Activated B cell treated with CpG ODN at 0.5 μM for 24 hours (primary cell): ENCODE measurements at regions of chr14 and their contacts with region 1.

Region 1: DNA sequence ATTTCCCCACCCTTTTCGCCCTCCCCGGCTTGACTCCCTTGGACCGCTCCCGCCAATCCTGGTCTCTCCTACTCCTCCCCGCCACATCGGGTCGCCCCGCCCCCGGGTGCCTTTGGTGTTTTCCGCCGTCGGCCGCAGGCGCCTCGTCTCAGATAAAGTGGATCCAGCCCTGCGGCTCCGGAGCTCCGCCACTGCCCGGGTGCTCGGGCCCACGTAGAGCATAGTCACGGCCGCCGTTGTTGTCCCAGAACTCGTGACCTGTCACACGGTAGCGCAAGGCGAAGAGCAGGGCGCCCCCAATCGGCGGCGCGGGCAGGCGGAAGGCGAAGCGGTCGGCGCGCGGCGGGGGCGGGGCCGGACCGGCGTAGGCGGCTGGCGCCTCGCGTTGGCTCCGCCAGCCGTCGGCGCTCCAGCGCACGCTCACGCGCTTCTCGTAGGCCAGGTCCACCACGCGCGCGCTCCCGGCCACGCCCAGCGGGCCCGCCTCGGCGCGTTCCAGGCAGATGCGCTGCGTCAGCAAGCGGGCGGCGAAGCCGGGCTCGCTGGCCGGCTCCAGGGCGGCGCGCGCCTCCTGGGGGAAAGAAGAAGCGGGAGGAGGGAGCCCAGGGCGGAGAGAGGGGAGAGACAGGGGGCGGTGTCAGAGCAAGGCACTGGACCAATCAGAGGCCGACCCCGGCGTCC is 1.2 kb downstream of the PPP1R3E start:
- DNase-seq: peak; percentile 99
- ATAC-seq: peak; percentile 78
- H3K4me3 Mint-ChIP-seq: peak overlapping the region; percentile 99
- H3K27ac Mint-ChIP-seq: peak overlapping the region; percentile 90
- H3K4me1 Mint-ChIP-seq: peaks cover 37% of the 10 kb centered on the region
- H3K27me3 Mint-ChIP-seq: no peaks in the 10 kb centered on the region
- CTCF ChIP-seq: no peak

Region 2: GRCh38 chr14:22386924-22387775 is 914.3 kb before region 1 on chr14:
- CTCF ChIA-PET with region 1: no interaction called
- POLR2A ChIA-PET with region 1: no interaction called
- intact Hi-C with region 1: loop called (anchors 10 kb)
- DNase-seq: peak; percentile 46
- ATAC-seq: peak; percentile 15
- H3K4me3 Mint-ChIP-seq: peak overlapping the region; percentile 24
- H3K27ac Mint-ChIP-seq: peak overlapping the region; percentile 98
- H3K4me1 Mint-ChIP-seq: peaks cover 78% of the 10 kb centered on the region
- H3K27me3 Mint-ChIP-seq: no peaks in the 10 kb centered on the region
- CTCF ChIP-seq: peak; percentile 18

Region 3: DNA sequence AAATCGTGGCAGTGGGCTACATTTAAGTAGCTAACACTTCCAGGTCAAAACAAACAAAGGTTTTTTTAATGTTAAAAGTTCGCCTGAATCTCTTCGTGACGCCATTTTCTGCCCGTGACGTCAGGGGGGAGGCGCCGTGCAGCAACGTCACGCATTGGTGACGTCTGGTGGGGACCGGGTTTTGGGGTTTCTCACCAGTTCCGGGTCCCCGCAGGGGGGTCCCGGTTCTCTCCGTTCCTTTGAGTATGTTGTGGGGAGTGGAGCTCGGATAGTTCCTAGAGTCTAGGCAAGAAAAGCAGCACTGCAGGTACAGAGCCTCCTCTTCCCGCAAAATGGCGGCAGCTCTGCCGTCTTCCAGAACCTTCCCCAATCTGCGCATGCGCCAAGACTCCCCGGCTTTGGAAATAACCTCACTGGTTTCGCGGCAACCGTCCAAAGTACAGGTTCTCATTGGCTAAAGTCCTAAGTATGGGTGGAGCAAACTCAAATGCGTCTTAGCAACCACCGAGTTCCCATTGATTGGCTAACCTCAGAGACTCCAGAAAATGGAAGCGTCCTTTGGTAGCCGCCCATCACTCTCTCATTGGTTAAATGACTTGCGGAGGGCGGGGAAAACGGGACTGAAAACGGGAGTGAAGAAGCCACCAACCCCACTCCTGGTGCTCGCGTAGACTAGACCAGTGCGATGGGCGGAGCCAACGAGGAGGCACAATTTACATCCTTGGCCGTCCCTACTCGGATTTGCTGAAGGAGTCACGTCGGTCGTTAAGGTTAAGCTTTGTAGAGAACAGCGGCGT is 382.4 kb before region 1 on chr14 and contains the start of gene RBM23:
- CTCF ChIA-PET with region 1: no interaction called
- POLR2A ChIA-PET with region 1: interaction called, 7 read pairs
- intact Hi-C with region 1: loop called (anchors 2 kb)
- DNase-seq: peak; percentile 94
- ATAC-seq: peak; percentile 94
- H3K4me3 Mint-ChIP-seq: peak within 1 kb of the TSS; percentile 99
- H3K27ac Mint-ChIP-seq: peak within 1 kb of the TSS; percentile 100
- H3K4me1 Mint-ChIP-seq: peaks cover 53% of the 10 kb centered on the region
- H3K27me3 Mint-ChIP-seq: no peaks in the 10 kb centered on the region
- CTCF ChIP-seq: no peak
- total RNA-seq, gene RBM23: 130 and 131 TPM in 2 replicates

Region 4: DNA sequence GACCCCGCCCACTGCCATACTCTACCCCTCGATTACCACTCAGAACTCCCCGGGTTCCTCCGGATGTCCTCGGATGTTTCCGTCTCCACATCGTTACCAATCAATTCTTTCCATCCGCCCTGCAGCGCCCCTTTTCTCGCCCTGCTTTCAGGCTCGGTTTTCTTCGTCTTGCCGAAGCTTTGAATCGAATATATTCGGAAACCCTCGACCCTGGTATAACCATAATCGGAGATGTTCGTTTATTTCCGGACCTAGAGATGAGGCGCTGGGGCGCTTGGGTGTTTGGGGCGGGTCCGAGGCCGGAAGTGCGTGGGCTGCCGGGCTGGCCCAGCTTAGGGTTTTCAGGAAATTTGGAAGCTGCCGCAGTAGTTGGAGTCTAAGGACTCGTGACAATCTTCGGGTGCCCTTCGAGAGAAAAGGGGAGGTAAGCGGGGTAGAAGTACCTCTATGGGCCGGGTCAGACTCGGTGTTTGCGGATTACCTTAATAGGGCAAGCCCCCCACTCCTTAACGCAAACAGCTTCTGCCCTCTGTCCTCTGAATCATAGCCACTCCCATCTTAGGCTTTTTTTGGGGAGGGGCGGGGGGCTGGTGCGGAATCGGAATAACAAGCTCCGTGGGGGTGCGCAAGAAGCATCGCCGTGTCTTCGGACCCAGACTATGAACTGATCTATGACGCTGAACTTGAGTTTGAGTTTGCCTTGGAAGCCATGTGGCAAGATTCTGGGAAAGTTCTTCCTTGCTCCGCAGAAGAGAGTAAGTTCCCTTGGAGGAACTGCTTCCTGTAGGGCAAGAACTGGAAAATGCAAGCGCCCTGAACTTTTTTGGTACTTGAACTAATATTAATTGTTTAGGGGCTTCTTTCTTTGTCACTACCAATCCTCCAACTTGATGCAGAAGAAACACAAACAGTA is 206.0 kb before region 1 on chr14 and contains the start of gene C14orf119:
- CTCF ChIA-PET with region 1: interaction called, 3 read pairs
- POLR2A ChIA-PET with region 1: interaction called, 26 read pairs
- intact Hi-C with region 1: loop called (anchors 1 kb)
- DNase-seq: peak; percentile 77
- ATAC-seq: peak; percentile 87
- H3K4me3 Mint-ChIP-seq: no peak within 1 kb of the TSS
- H3K27ac Mint-ChIP-seq: no peak within 1 kb of the TSS
- H3K4me1 Mint-ChIP-seq: peaks cover 34% of the 10 kb centered on the region
- H3K27me3 Mint-ChIP-seq: no peaks in the 10 kb centered on the region
- CTCF ChIP-seq: no peak
- total RNA-seq, gene C14orf119: 35.3 and 36.0 TPM in 2 replicates

Region 5: GRCh38 chr14:23242076-23242475 is 59.4 kb before region 1 on chr14:
- CTCF ChIA-PET with region 1: no interaction called
- POLR2A ChIA-PET with region 1: no interaction called
- intact Hi-C with region 1: no loop called
- DNase-seq: no peak
- ATAC-seq: peak; percentile 46
- H3K4me3 Mint-ChIP-seq: no peak overlapping the region
- H3K27ac Mint-ChIP-seq: no peak overlapping the region
- H3K4me1 Mint-ChIP-seq: peaks cover 9% of the 10 kb centered on the region
- H3K27me3 Mint-ChIP-seq: peaks cover 13% of the 10 kb centered on the region
- CTCF ChIP-seq: no peak

Region 6: GRCh38 chr14:23286020-23286905 is 15.2 kb before region 1 on chr14 and contains the start of gene HOMEZ:
- CTCF ChIA-PET with region 1: interaction called, 14 read pairs
- POLR2A ChIA-PET with region 1: interaction called, 44 read pairs
- intact Hi-C with region 1: loop called (anchors 1 kb)
- DNase-seq: peak; percentile 97
- ATAC-seq: peak; percentile 97
- H3K4me3 Mint-ChIP-seq: peak within 1 kb of the TSS; percentile 96
- H3K27ac Mint-ChIP-seq: peak within 1 kb of the TSS; percentile 90
- H3K4me1 Mint-ChIP-seq: peaks cover 18% of the 10 kb centered on the region
- H3K27me3 Mint-ChIP-seq: no peaks in the 10 kb centered on the region
- CTCF ChIP-seq: no peak
- total RNA-seq, gene HOMEZ: 10.8 and 11.5 TPM in 2 replicates

Region 7: GRCh38 chr14:23469127-23469905 is 167.9 kb after region 1 on chr14 and contains the start of gene NGDN:
- CTCF ChIA-PET with region 1: no interaction called
- POLR2A ChIA-PET with region 1: interaction called, 3 read pairs
- intact Hi-C with region 1: loop called (anchors 1 kb)
- DNase-seq: peak; percentile 80
- ATAC-seq: peak; percentile 90
- H3K4me3 Mint-ChIP-seq: no peak within 1 kb of the TSS
- H3K27ac Mint-ChIP-seq: no peak within 1 kb of the TSS
- H3K4me1 Mint-ChIP-seq: peaks cover 11% of the 10 kb centered on the region
- H3K27me3 Mint-ChIP-seq: no peaks in the 10 kb centered on the region
- CTCF ChIP-seq: no peak
- total RNA-seq, gene NGDN: 60.5 and 67.4 TPM in 2 replicates